ENCODE measurements at regions of chr5 and their contacts with region 1.

Region 1: GRCh38 chr5:131796793-131797693 is at the start of gene FNIP1:
- DNase-seq: peak; percentile 98
- ATAC-seq: peak; percentile 93
- H3K4me3 ChIP-seq: peak within 1 kb of the TSS; percentile 66 to 82 (median 76)
- H3K4me3 Mint-ChIP-seq: peak within 1 kb of the TSS; percentile 98
- H3K27ac ChIP-seq: peak within 1 kb of the TSS; percentile 82 to 100
- H3K27ac Mint-ChIP-seq: peak within 1 kb of the TSS; percentile 96
- H3K4me1 ChIP-seq: peaks cover 15 to 21% of the 10 kb centered on the region in 2 donors
- H3K4me1 Mint-ChIP-seq: peaks cover 40% of the 10 kb centered on the region
- H3K27me3 ChIP-seq: no peaks in the 10 kb centered on the region
- H3K27me3 Mint-ChIP-seq: no peaks in the 10 kb centered on the region
- CTCF ChIP-seq: no peak
- total RNA-seq, gene FNIP1: 52.8 and 57.8 TPM in 2 replicates

Region 2: GRCh38 chr5:131170540-131171275 is 626.3 kb before region 1 on chr5 and contains the start of gene LYRM7:
- CTCF ChIA-PET with region 1: no interaction called
- POLR2A ChIA-PET with region 1: no interaction called
- intact Hi-C with region 1: loop called (anchors 2 kb)
- DNase-seq: peak; percentile 98
- ATAC-seq: peak; percentile 96
- H3K4me3 ChIP-seq: peak within 1 kb of the TSS; percentile 78 to 89 (median 79)
- H3K4me3 Mint-ChIP-seq: peak within 1 kb of the TSS; percentile 98
- H3K27ac ChIP-seq: peak within 1 kb of the TSS; percentile 77 to 81
- H3K27ac Mint-ChIP-seq: peak within 1 kb of the TSS; percentile 94
- H3K4me1 ChIP-seq: peaks cover 24% of the 10 kb centered on the region in 2 donors
- H3K4me1 Mint-ChIP-seq: peaks cover 47% of the 10 kb centered on the region
- H3K27me3 ChIP-seq: no peaks in the 10 kb centered on the region
- H3K27me3 Mint-ChIP-seq: no peaks in the 10 kb centered on the region
- CTCF ChIP-seq: no peak
- total RNA-seq, gene LYRM7: 11.6 and 12.3 TPM in 2 replicates

Region 3: DNA sequence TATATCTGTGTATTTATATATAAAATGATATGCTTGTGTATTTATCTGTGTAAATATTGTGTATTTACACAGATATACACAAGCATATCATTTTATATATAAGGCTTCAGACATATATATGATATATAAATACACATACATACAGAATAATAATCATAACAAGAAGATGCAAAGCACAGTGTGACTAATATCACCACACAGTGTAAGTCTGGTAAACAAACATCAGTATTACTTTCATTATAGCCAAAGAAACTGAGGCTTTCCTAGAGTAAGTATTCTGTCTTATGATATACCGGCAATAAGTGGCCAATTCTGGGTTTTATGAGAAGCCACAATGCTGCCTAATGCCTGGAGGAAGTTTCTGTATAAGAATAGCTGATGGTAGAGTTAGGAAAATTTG is 132.1 kb before region 1 on chr5:
- CTCF ChIA-PET with region 1: no interaction called
- POLR2A ChIA-PET with region 1: no interaction called
- intact Hi-C with region 1: no loop called
- DNase-seq: no peak
- ATAC-seq: no peak
- H3K4me3 ChIP-seq: no peak overlapping the region
- H3K4me3 Mint-ChIP-seq: no peak overlapping the region
- H3K27ac ChIP-seq: no peak overlapping the region
- H3K27ac Mint-ChIP-seq: no peak overlapping the region
- H3K4me1 ChIP-seq: no peaks in the 10 kb centered on the region
- H3K4me1 Mint-ChIP-seq: no peaks in the 10 kb centered on the region
- H3K27me3 ChIP-seq: no peaks in the 10 kb centered on the region
- H3K27me3 Mint-ChIP-seq: no peaks in the 10 kb centered on the region
- CTCF ChIP-seq: no peak

Region 4: DNA sequence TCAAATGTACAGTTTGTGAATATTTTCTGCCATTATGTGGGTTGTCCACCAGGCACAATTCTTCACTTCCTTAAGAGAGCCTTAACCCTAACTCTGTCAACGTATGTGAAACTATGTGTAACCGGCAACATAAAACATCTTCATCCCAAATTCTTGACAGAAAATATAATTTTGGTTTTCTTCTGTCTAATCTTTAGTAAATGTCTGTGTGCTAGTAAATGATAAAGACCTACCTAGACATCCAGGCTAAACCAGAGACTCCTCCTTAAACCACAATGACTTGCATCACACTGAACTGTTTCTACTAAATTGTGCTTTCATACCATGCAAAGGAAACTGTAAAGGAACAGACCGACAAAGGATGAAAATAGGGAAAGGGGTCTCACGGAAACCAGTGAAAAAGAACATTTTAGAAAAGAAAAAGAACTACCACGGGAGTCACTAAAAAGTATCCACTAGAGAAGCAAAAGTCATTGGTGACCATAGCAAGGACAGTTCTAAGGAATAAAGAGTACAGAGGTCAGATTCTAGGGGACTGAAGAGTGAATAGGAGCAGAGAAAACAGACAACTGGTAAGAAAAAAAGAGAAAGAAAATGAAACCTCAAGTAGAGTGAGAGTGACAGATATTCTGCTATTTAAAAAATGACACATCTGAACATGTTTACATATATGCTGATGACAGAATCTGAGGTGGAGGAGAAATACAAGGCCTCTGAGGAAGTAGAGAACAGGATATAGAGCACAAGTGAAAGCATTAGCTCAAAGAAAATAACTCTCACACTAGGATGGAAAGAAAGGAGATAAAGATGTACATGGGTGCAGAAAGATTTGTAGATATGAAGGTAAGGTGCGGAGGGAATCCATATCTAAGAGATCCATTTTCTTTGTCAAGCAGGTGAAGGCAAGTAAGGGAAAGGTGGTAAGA is 49.6 kb before region 1 on chr5:
- CTCF ChIA-PET with region 1: no interaction called
- POLR2A ChIA-PET with region 1: no interaction called
- intact Hi-C with region 1: loop called (anchors 10 kb)
- DNase-seq: peak; percentile 23
- ATAC-seq: peak; percentile 47
- H3K4me3 ChIP-seq: peak overlapping the region in 1 of 5 experiments; percentile 15
- H3K4me3 Mint-ChIP-seq: peak overlapping the region; percentile 38
- H3K27ac ChIP-seq: peak overlapping the region; percentile 46 to 65
- H3K27ac Mint-ChIP-seq: peak overlapping the region; percentile 13
- H3K4me1 ChIP-seq: peaks cover 12 to 14% of the 10 kb centered on the region in 2 donors
- H3K4me1 Mint-ChIP-seq: peaks cover 34% of the 10 kb centered on the region
- H3K27me3 ChIP-seq: no peaks in the 10 kb centered on the region
- H3K27me3 Mint-ChIP-seq: no peaks in the 10 kb centered on the region
- CTCF ChIP-seq: no peak

Region 5: DNA sequence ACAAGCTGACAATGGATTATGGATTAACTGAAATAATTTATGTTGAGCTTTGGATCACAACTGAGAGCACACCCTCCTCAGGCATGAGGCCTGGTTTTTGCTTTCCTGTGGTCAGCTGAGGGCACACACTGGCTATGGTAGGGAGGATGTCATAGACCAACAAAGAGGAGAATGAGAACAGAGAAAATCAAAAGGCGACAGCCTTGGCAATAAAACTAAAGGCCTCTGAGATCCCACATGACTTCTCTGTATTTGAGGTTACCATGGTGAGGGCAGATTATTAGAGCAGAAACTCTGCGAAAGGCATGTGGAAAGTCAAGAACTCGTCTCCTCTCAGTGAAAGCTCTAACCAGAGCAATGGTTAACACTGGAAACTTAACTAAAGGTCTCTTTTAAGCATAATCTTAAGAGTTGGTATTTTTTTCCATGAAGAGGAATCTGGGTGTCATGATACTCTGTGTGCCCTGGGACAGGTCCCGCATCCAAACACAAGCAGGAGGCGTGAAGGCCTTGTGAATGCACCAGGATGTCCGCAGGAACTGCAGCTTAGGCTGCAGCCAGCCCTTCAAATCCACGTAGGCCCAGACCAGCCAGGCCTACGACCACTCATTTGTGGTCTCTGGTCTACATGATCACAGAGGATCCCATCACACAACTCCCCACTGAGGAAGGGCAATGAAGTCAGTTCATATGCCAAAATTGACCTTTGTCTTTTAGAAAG is 160.8 kb after region 1 on chr5:
- CTCF ChIA-PET with region 1: no interaction called
- POLR2A ChIA-PET with region 1: no interaction called
- intact Hi-C with region 1: no loop called
- DNase-seq: no peak
- ATAC-seq: no peak
- H3K4me3 ChIP-seq: no peak overlapping the region
- H3K4me3 Mint-ChIP-seq: no peak overlapping the region
- H3K27ac ChIP-seq: no peak overlapping the region
- H3K27ac Mint-ChIP-seq: no peak overlapping the region
- H3K4me1 ChIP-seq: no peaks in the 10 kb centered on the region
- H3K4me1 Mint-ChIP-seq: no peaks in the 10 kb centered on the region
- H3K27me3 ChIP-seq: no peaks in the 10 kb centered on the region
- H3K27me3 Mint-ChIP-seq: no peaks in the 10 kb centered on the region
- CTCF ChIP-seq: no peak

Region 6: GRCh38 chr5:131974956-131975726 is 178.1 kb after region 1 on chr5:
- CTCF ChIA-PET with region 1: no interaction called
- POLR2A ChIA-PET with region 1: no interaction called
- intact Hi-C with region 1: no loop called
- DNase-seq: no peak
- ATAC-seq: no peak
- H3K4me3 ChIP-seq: no peak overlapping the region
- H3K4me3 Mint-ChIP-seq: no peak overlapping the region
- H3K27ac ChIP-seq: no peak overlapping the region
- H3K27ac Mint-ChIP-seq: no peak overlapping the region
- H3K4me1 ChIP-seq: no peaks in the 10 kb centered on the region
- H3K4me1 Mint-ChIP-seq: no peaks in the 10 kb centered on the region
- H3K27me3 ChIP-seq: no peaks in the 10 kb centered on the region
- H3K27me3 Mint-ChIP-seq: no peaks in the 10 kb centered on the region
- CTCF ChIP-seq: no peak